H1 (cell line): ENCODE measurements at regions of chr6 and their contacts with region 1.

Region 1: DNA sequence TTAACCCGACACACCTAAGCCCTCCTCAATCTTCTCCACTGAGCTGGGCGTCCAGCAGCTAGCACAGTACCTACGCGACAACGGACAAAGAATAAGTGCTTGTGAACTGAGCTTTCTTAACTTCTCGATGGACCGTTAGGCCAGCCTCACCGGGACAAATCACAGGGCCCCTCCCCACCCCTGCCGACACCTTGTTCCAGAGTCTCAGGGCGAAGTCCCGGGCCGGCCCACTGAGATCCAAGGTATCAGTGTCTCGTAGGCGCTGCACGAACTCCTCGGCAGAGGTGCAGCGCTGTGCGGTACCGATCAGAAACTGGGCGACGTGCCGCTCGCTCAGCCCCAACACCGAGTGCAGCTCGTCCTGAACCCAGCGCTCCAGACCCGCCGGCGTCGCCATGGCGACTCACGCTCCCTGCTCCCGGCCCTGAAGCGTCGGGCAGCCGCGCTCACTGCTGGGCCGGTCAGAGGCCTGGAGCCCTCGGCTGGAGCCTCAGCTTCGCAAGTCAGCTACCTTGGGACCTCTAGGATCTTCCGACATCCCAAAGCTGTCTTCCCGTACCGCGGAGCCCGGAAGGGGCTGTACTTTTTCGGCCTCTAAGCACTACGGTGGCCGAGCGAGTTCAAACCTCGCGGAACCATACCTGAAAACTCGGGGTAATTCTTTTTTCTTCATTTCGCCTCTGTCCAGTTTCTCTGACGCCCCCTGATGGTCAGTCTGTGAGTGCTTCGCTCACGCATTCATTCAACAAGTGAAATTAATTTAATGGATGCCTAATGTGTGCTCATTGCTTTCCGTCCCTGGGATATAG is at the start of gene DHX16:
- DNase-seq: peak; percentile 88 to 94
- H3K4me3 ChIP-seq: peak within 1 kb of the TSS; percentile 76 to 99 (median 90)
- H3K27ac ChIP-seq: no peak within 1 kb of the TSS
- H3K4me1 ChIP-seq: no peaks in the 10 kb centered on the region; a peak in 1 of 7 replicates
- H3K27me3 ChIP-seq: no peaks in the 10 kb centered on the region
- CTCF ChIP-seq: peak; percentile 50 to 80 (median 72)
- EP300 ChIP-seq: 0 out of 3 replicates have a peak, but pooled peaks of 1 of the 2 experiments have one; percentile 32
- POLR2A ChIP-seq: no peak
- RAD21 ChIP-seq: peak; percentile 19 to 42; a peak in 2 of 4 replicates
- total RNA-seq, gene DHX16: 27.4 and 29.4 TPM in 2 replicates

Region 2: GRCh38 chr6:30656513-30656912 is 16.1 kb before region 1 on chr6:
- CTCF ChIA-PET with region 1: interaction called, 12 read pairs
- POLR2A ChIA-PET with region 1: interaction called, 50 read pairs
- DNase-seq: no peak
- H3K4me3 ChIP-seq: no peak overlapping the region
- H3K27ac ChIP-seq: no peak overlapping the region
- H3K4me1 ChIP-seq: no peaks in the 10 kb centered on the region
- H3K27me3 ChIP-seq: no peaks in the 10 kb centered on the region
- CTCF ChIP-seq: no peak
- EP300 ChIP-seq: no peak
- POLR2A ChIP-seq: no peak
- RAD21 ChIP-seq: no peak

Region 3: DNA sequence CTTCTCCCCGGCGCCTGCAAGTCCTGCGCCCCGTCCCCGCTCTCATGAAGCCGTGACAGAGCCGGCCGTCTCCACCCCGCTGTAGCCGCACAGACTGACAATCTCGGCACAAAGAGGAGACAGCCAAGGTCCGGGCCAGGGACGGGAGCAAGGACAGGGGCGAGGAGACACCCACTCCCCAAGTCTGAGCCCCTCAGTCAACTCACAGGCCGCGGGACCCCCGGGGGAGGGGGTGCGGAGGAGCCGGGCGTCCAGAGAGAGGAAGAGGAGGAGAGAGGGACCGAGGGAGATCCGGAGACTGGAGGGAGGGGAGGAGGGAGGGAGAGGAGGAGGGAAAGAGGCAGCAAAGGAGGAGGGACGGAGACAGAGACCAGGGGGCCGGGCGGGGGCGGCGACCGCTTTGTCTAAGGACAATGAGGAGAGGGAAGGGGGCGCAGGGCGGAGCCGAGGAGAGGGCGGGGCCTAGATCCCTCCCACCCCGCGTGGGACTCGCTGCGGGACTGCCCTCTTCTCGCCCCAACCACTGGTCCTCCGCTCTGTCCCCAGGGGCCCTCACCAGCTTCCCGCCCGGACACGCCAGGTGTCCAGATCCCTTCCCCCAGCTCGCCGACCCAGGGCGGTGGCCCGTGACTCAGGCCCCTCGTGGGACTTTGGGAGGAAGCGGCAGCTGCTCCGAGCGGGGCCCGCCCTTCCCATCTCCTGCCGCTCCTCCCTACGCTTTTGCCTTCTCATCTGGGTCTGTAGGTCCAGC is 14.4 kb after region 1 on chr6:
- CTCF ChIA-PET with region 1: interaction called, 21 read pairs
- POLR2A ChIA-PET with region 1: interaction called, 5 read pairs
- DNase-seq: peak in 1 of 2 experiments; percentile 92
- H3K4me3 ChIP-seq: peak overlapping the region; percentile 49 to 97 (median 80)
- H3K27ac ChIP-seq: peak overlapping the region; percentile 35; the same call in 1 of the 2 replicates
- H3K4me1 ChIP-seq: peaks cover 7 to 49% (median 32%) of the 10 kb centered on the region in 4 experiments
- H3K27me3 ChIP-seq: no peaks in the 10 kb centered on the region
- CTCF ChIP-seq: no peak
- EP300 ChIP-seq: peak in 1 of 2 experiments; percentile 94; a peak in 1 of 3 replicates
- POLR2A ChIP-seq: no peak; a peak in 1 of 3 replicates
- RAD21 ChIP-seq: no peak

Region 4: DNA sequence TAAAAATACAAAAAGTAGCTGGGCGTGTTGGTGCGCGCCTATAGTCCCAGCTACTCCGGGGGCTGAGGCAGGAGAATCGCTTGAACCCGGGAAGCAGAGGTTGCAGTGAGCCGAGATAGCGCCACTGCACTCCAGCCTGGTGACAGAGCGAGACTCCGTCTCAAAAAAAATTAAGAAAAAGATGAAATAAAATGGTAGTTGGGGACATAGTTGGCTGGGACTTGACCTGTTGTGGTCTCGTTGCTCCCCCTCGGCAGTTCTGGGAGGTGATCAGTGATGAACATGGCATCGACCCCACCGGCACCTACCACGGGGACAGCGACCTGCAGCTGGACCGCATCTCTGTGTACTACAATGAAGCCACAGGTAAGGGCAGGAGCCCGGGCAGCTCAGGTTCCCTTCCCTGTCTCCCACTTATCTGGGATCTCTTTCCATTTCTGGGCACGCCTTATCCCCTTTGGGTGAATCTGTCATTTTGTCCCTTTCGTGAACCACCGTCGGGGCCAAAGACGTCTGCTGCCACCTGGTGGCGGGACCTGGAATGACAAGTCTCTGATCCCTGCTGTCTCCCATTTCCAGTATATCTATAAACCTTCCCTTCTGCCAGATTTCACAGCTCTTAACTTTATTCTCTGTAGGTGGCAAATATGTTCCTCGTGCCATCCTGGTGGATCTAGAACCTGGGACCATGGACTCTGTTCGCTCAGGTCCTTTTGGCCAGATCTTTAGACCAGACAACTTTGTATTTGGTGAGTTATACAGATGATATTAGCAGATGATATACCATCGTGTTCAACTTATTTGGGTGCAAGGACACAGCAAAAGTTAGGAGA is 49.8 kb after region 1 on chr6:
- CTCF ChIA-PET with region 1: interaction called, 147 read pairs
- POLR2A ChIA-PET with region 1: interaction called, 388 read pairs
- DNase-seq: peak in 1 of 2 experiments; percentile 92
- H3K4me3 ChIP-seq: peak overlapping the region; percentile 96 to 100 (median 96); a peak in 7 of 8 replicates
- H3K27ac ChIP-seq: no peak overlapping the region
- H3K4me1 ChIP-seq: peaks cover 0 to 4% (median 1%) of the 10 kb centered on the region in 4 experiments; a peak in 4 of 7 replicates
- H3K27me3 ChIP-seq: no peaks in the 10 kb centered on the region
- CTCF ChIP-seq: peak; percentile 85 to 88 (median 87)
- EP300 ChIP-seq: no peak
- POLR2A ChIP-seq: peak; percentile 61 to 77; a peak in 2 of 3 replicates
- RAD21 ChIP-seq: peak; percentile 71 to 80

Region 5: DNA sequence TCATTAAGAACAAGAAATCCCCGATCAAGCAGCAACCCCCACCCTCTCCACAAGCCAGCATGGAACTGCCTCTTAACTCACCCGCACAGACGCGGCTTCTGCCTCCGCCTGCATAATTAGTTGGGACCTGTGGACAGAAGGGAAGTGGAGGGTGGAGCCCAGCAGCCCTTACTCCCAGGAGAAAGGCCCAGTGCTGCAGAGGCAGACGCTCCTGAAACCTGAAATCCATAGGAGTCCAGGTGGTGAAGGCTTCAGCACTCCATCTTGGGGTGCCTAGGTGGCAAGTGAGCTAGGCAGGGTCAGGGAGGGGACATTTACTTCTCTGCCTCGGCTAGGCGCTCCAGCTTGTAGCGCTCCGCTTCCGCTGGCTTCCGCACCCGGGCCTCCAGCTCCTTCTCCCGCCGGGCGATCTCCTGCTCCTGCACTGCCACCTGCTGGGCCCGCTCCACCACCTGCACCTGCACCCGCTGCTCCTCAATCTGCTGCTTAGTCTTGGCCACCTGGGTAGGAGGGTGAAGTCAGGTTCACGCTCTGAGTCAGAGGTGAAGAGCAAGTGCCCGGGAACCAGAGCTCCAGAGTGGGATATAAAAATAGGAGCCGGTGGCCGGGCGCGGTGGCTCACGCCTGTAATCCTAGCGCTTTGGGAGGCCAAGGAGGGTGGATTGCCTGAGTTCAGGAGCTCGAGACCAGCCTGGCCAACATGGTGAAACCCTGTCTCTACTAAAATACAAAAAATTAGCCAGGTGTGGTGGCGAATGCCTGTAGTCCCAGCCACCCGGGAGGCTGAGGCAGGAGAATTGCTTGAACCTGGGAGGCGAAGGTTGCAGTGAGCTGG is 58.2 kb after region 1 on chr6:
- CTCF ChIA-PET with region 1: interaction called, 147 read pairs
- POLR2A ChIA-PET with region 1: interaction called, 388 read pairs
- DNase-seq: peak in 1 of 2 experiments; percentile 87
- H3K4me3 ChIP-seq: no peak overlapping the region
- H3K27ac ChIP-seq: no peak overlapping the region
- H3K4me1 ChIP-seq: no peaks in the 10 kb centered on the region
- H3K27me3 ChIP-seq: no peaks in the 10 kb centered on the region
- CTCF ChIP-seq: peak; percentile 71 to 78 (median 73)
- EP300 ChIP-seq: no peak
- POLR2A ChIP-seq: no peak
- RAD21 ChIP-seq: peak; percentile 79 to 85